ENCODE measurements at regions of chr3 and their contacts with region 1.

Region 1: GRCh38 chr3:45938864-45939263 is 4.4 kb upstream of the CXCR6 start:
- DNase-seq: peak; percentile 74
- ATAC-seq: peak; percentile 85

Region 2: GRCh38 chr3:46078712-46079400 is 140.0 kb after region 1 on chr3:
- intact Hi-C with region 1: loop called (anchors 2 kb)
- DNase-seq: peak; percentile 80
- ATAC-seq: peak; percentile 96

Measured in left ventricle myocardium superior (tissue), 1 donor.